ENCODE measurements at regions of chr16 and their contacts with region 1.

Region 1: DNA sequence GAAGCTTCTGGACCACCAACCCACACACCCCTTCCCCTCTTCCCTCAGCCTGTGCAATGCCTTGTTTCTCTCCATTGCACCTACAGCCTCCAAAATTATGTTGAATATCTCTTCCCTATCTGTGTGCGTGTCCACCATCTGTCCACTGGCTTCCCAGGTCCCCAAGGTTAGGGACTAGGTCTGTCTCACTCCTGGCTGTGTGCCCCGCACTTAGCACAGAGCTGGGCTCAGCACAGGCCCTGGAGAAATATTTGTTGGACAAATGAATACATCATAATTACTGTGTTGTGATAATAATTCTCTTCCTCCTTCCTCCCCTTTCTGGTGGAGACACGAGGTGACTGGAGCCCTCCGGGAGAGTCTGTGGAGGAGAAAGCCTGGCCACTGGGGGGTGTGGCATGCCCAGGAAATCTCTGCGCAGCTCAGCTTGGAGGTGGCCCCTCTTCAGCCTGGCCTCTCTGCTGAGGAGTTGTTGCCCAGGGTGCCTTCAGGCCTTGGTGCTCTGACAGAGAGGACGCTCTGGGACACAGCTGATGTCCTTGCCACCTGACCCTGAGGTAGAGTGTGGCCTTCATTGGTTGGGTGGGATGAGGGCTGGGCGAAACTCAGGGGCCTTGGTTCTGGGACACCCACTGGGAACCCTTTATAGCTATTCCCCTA is 3.3 kb upstream of the BRD7 start:
- DNase-seq: peak; percentile 31 to 76 (median 44)
- H3K4me3 ChIP-seq: no peak overlapping the region
- H3K27ac ChIP-seq: peak overlapping the region in 1 of 5 donors; percentile 47
- H3K4me1 ChIP-seq: peaks cover 7 to 17% of the 10 kb centered on the region in 2 donors
- H3K27me3 ChIP-seq: no peaks in the 10 kb centered on the region
- CTCF ChIP-seq: peak in 5 of 6 experiments; percentile 25 to 38 (median 36)
- POLR2A ChIP-seq: no peak

Region 2: GRCh38 chr16:50591800-50592771 is 220.0 kb after region 1 on chr16:
- intact Hi-C with region 1: no loop called
- DNase-seq: peak; percentile 93 to 97 (median 96)
- H3K4me3 ChIP-seq: no peak overlapping the region
- H3K27ac ChIP-seq: peak overlapping the region in 3 of 5 donors; percentile 60 to 72 (median 67)
- H3K4me1 ChIP-seq: peaks cover 4 to 16% of the 10 kb centered on the region in 2 donors
- H3K27me3 ChIP-seq: no peaks in the 10 kb centered on the region
- CTCF ChIP-seq: peak in 5 of 6 experiments; percentile 19 to 43 (median 43)
- POLR2A ChIP-seq: peak in 1 of 2 donors; percentile 62

Region 3: DNA sequence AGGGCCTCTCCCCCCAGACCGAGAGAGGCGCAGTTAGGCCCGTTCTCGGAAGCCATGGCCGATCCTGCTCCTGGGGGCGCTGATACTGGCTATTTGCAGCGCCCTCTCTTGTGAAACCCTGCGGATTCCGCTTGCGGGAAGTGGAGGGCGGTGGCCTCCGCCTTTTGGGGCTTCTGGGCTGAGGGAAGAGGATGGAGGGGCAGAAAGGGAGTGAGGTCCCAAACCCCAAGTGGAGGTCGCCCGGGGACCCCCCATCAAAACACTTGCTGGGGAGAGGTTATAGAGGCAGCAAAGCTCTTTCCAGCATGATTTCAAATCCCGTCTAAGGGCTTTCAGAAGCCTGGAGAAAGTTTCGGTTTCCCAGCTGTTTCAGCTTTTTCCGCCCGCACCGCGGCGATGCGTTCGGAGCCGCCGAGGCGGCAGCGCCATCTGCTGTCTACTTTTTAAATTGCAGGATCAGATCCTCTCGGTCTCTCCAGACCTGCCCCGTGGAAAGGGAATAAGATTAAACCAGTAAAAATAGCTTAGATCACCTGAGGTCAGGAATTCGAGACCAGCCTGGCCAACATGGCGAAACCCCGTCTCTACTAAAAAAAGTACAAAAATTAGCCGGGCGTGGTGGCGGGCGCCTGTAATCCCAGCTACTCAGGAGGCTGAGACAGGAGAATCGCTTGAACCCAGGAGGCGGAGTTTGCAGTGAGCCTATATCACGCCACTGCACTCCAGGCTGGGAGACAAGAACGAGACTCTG is 293.2 kb after region 1 on chr16:
- intact Hi-C with region 1: loop called (anchors 5 kb)
- DNase-seq: peak; percentile 72 to 91 (median 85)
- H3K4me3 ChIP-seq: peak overlapping the region in 2 of 4 donors; percentile 52 to 57
- H3K27ac ChIP-seq: peak overlapping the region in 3 of 5 donors; percentile 49 to 59 (median 54)
- H3K4me1 ChIP-seq: peaks cover 0 to 3% of the 10 kb centered on the region in 2 donors
- H3K27me3 ChIP-seq: no peaks in the 10 kb centered on the region
- CTCF ChIP-seq: peak; percentile 77 to 97 (median 88)
- POLR2A ChIP-seq: no peak

Region 4: DNA sequence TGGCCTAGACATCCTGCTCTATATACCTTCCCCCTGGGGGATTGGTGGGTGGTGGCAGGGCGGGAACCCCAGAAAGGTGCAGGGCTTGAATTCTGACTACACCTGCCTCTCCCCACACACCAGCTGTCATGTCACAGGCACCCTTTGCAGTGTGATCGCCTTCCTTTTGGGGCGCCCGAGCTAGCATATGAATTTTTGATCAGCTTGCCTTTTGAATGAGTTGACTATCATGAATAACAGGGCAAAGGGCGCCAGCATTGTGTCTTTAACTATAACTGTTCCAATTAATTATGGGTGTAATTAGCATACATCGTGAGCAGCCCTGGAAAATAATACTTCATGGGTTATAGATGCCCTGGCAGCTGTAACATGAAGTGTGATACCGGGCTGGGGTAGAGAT is 442.5 kb after region 1 on chr16:
- intact Hi-C with region 1: loop called in 1 of 2 experiments (anchors 10 kb)
- DNase-seq: no peak
- H3K4me3 ChIP-seq: no peak overlapping the region
- H3K27ac ChIP-seq: no peak overlapping the region
- H3K4me1 ChIP-seq: no peaks in the 10 kb centered on the region
- H3K27me3 ChIP-seq: no peaks in the 10 kb centered on the region
- CTCF ChIP-seq: no peak
- POLR2A ChIP-seq: no peak

Measured in adrenal gland (tissue), 19 donors.